Left cardiac atrium (tissue), 4 donors: ENCODE measurements at regions of chr9 and their contacts with region 1.

Region 1: DNA sequence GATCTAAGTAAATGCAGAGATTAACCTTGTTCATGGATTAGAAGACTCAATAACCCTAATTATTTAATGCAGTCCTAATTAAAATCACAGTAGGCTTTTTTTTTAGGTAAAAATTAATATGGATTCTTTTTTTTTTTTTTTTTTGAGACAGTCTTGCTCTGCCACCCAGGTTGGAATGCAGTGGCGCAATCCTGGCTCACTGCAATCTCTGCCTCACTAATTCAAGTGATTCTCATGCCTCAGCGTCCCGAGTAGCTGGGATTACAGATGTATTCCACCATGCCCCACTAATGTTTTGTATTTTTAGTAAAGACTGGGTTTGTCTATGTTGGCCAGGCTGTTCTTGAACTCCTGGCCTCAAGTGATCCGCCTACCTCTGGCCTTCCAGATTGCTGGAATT is 40.6 kb downstream of the DENND4C start:
- DNase-seq: no peak
- ATAC-seq: no peak

Region 2: DNA sequence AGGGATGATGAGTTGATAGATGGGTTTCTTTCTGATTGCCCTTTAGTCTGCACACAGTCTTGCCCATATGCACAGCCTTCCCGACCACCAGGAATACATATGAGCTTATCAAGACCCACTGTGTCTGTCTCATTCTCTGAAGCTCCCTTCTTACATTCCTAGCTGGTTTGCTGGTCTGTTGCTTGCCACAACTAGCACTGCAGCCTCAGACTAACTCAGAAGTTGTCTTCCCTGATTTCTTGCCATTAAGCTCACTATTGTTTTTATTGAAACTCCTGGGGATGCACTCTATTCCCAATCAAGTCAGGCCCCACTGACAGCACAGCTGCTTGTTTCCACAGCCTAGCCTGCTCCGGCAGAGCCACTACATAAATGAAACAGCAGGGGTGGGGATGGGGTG is 335.5 kb before region 1 on chr9:
- intact Hi-C with region 1: no loop called
- DNase-seq: no peak
- ATAC-seq: no peak

Region 3: DNA sequence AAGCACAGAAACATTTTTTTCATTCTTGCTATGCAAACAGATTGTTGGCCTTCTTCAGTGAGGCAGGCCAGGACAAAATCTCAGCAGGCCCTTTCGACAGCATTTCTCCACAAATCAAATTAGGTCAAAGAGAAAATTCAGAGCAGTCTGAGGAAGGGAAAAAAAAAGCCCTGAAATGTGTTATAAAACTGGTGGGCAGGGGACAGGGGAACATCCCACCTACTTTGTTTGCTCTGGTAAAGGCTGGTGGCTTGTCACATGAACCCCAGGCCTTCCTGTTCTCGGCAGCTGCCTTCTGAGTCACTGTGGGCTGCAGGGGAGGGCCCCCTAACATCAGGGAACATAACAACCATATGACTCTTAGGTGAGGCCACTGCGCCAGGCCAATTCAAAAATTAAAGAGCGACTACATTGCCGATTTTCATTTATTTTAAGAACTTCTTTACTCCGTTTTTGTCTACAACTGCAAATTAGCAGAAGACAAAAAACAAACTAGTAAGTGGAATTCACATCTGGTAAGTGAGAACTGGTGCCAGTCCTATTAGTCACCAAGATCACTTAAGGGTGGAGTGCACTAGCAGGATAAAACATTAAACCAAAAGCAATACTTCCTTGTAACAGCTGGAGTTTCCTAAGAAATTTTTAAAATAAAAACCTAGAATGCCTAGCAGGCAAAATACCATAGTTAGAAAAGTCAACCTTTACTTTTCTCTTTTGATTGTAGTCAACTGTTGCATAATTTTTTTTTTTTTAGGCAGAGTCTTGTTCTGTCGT is 86.7 kb before region 1 on chr9:
- intact Hi-C with region 1: no loop called
- DNase-seq: peak; percentile 80
- ATAC-seq: peak; percentile 85 to 93

Region 4: DNA sequence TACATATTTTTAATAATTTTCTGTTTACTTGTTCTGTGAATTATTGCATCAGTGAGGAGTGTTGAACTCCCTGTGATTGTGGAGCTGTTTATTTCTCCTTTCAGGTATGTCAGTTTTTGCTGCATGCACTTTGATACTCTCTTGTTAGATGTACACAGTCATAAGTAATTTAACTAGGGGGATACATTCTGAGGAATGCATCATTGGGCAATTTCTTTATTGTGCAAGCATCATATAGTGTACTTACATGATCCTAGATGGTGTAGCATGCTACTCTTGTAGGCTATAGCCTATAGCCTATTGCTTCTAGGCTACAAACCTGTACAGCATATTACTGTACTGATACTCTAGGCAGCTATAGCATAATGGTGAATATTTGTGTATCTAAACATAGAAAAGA is 31.1 kb before region 1 on chr9:
- intact Hi-C with region 1: loop called in 1 of 2 experiments (anchors 5 kb)
- DNase-seq: no peak
- ATAC-seq: no peak